ENCODE measurements at regions of chr11 and their contacts with region 1.

Region 1: GRCh38 chr11:88575916-88576315 is 238.4 kb upstream of the CTSC start:
- DNase-seq: no peak
- ATAC-seq: no peak
- H3K4me3 ChIP-seq: no peak overlapping the region
- H3K27ac ChIP-seq: no peak overlapping the region
- H3K4me1 ChIP-seq: no peaks in the 10 kb centered on the region
- H3K27me3 ChIP-seq: peaks cover 0 to 2% of the 10 kb centered on the region in 2 experiments; a peak in 1 of 4 replicates
- CTCF ChIP-seq: no peak
- EP300 ChIP-seq: no peak
- POLR2A ChIP-seq: no peak
- RAD21 ChIP-seq: no peak

Region 2: DNA sequence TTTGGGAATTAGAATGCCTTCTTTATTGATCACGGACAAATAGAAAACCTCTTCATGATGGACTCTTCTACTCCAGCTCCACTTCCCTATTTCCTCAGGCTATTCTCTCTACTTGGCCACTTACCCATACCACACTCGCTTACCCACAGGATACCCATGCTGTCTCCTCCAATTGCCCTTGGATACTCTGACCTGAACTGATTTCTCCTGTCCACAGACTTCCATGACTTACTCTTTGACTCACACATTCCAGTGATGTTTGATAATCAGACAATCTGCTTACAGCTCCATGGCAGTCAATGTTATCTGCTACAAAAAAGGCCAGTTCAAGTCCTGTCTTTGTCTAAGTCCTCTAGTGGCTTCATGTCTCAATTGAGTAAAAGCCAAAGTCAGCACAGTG is 53.6 kb after region 1 on chr11:
- CTCF ChIA-PET with region 1: no interaction called
- POLR2A ChIA-PET with region 1: no interaction called
- RAD21 ChIA-PET with region 1: no interaction called
- SMC1A ChIA-PET with region 1: no interaction called
- in situ Hi-C with region 1: no loop called
- intact Hi-C with region 1: loop called (anchors 5 kb)
- DNase-seq: no peak
- ATAC-seq: no peak
- H3K4me3 ChIP-seq: no peak overlapping the region
- H3K27ac ChIP-seq: no peak overlapping the region
- H3K4me1 ChIP-seq: no peaks in the 10 kb centered on the region
- H3K27me3 ChIP-seq: no peaks in the 10 kb centered on the region
- CTCF ChIP-seq: no peak
- EP300 ChIP-seq: no peak
- POLR2A ChIP-seq: no peak
- RAD21 ChIP-seq: no peak

Measured in GM12878 (cell line).